Sciatic nerve (tissue), 2 donors: ENCODE measurements at regions of chr1 and their contacts with region 1.

Region 1: GRCh38 chr1:193104906-193105820 is at the start of gene GLRX2:
- DNase-seq: peak; percentile 91
- ATAC-seq: peak; percentile 97
- total RNA-seq, gene GLRX2: 16.0 TPM

Region 2: DNA sequence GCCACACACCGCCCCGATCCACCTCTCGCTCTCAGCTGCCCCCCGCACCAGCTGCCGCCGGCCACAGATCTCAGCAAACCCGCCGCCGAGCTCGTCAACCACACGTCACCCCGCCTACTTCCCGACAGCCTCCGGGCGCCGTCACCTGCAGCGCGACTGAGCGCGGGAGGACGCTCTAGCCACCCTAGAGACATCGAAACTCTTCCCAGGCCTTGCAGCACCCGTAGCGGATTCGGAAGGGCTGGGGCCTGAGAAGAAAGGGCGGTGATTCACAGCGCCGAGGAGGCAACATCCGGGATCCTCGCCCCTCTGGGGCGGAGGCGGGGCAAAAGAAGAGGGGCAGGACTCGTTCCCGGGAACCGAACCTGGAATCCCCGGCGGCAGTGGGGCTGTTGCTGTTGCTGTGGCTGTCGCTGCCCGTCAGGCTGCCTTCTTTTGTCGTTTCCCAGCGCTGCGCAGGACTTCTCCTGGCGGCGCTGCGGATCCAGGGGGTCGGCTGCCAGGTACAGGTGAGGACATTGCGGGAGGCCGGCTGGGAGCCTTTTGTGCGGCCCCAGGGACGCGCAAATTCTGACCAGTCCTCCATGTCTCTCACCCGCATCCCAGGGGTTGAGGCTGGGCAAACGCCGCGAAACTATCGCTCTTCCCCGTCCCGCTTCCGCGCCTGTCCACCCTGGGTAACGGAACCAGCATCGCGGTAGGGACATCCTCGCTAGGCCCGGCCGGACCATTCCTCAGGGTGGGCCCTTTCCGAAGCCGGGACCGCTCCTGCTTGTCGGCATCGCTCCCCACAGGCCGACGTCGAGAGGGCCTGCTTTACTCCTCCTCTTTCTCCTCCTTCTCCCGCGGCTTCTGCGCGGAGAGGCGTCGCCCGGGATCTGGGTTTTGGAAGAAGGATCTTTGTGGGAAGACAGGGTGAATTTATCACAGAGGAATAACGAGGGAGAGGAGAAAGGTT is 45.6 kb before region 1 on chr1 and contains the starts of genes RO60 and UCHL5:
- intact Hi-C with region 1: loop called (anchors 5 kb)
- DNase-seq: peak; percentile 96
- ATAC-seq: peak; percentile 99
- total RNA-seq, gene RO60: 84.8 TPM
- total RNA-seq, gene UCHL5: 34.0 TPM